Posterior cingulate gyrus (tissue), 11 donors: ENCODE measurements at regions of chr7 and their contacts with region 1.

Region 1: GRCh38 chr7:4681886-4682620 is at the start of gene FOXK1:
- DNase-seq: peak; percentile 53 to 97 (median 74)

Region 2: DNA sequence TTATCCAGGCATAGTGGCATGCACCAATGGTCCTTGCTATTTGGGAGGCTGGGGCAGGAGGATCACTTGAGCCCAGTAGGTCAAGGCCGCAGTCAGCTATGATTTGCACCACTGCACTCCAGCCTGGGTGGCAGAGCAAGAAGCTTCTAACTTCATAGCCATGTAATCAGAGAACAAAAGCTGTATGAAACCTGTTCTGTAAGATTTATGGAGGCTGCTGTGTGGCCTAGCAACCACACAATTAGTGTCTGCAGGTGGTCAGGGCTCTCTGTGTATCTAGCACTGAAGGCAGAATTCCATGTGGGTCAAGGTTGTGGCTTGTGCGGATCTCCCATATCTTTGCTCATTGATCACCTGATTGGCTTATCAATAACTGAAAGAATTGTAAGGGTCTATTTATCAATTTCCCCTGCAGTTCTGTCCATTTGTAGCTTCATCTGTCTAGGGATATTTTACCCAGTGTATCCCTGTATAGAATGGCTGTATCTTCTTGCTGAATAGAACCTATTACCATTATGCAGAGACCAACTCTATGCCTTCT is 221.4 kb before region 1 on chr7:
- intact Hi-C with region 1: no loop called
- DNase-seq: no peak

Region 3: GRCh38 chr7:4621401-4622145 is 60.5 kb before region 1 on chr7:
- intact Hi-C with region 1: no loop called
- DNase-seq: peak in 1 of 10 donors; percentile 9

Region 4: GRCh38 chr7:4724648-4725013 is 42.6 kb after region 1 on chr7:
- intact Hi-C with region 1: loop called (anchors 5 kb)
- DNase-seq: no peak

Region 5: GRCh38 chr7:4753711-4754432 is 71.8 kb after region 1 on chr7:
- intact Hi-C with region 1: loop called (anchors 5 kb)
- DNase-seq: peak; percentile 69 to 97 (median 85)